ENCODE measurements at regions of chr1 and their contacts with region 1.

Region 1: DNA sequence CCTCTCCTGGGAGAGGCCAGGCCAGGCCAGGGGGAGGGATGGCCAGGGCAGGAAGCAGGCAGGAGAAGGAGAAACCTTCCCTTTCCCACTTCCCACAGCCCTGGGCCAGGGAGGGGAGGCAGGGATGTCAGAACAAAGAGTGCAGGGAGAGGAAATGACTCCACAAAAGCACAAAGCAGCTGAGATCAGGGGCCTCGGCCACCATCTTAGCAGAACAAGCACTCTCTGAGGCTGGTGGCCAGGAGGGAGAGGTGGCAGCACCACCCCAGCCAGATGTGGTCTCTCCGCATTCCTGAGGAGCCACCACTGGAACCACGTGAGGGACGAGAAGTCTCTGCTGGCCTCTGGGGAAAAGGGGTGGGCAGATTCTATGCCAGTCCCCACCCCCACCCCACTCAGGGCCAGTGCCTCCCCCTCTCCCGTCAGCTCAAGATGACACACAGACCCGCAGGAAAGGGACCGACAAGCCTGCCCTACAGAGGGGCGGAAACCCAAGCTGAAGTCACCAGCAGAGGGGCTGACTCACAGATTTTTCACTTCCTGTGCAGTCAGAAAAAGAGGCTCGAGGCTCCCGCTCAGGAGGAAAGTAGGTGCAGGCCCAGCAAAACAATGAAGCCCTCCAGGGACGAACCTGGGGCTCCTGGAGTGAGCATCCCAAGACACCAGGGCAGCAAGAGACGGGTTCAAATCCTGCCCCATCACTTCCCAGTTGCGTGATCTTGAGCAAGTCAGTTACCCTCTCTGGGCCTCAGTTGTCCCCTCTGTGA is 24.1 kb upstream of the ALDH4A1 start:
- DNase-seq: peak in 1 of 2 donors; percentile 63
- H3K4me3 ChIP-seq: peak overlapping the region in 2 of 3 donors; percentile 5 to 45
- H3K27ac ChIP-seq: peak overlapping the region; percentile 68 to 89
- H3K4me1 ChIP-seq: peaks cover 25 to 33% of the 10 kb centered on the region in 2 donors
- H3K27me3 ChIP-seq: no peaks in the 10 kb centered on the region
- CTCF ChIP-seq: no peak
- POLR2A ChIP-seq: no peak

Region 2: GRCh38 chr1:17682399-17682798 is 1244.1 kb before region 1 on chr1:
- intact Hi-C with region 1: loop called (anchors 5 kb)
- DNase-seq: peak in 1 of 2 donors; percentile 58
- H3K4me3 ChIP-seq: no peak overlapping the region
- H3K27ac ChIP-seq: peak overlapping the region; percentile 23 to 33
- H3K4me1 ChIP-seq: no peaks in the 10 kb centered on the region
- H3K27me3 ChIP-seq: no peaks in the 10 kb centered on the region
- CTCF ChIP-seq: no peak
- POLR2A ChIP-seq: no peak